Posterior cingulate gyrus (tissue), 11 donors: ENCODE measurements at regions of chr3 and their contacts with region 1.

Region 1: GRCh38 chr3:195522254-195523023 is 20.7 kb downstream of the PPP1R2 start:
- DNase-seq: no peak

Region 2: GRCh38 chr3:194671900-194672808 is 850.3 kb before region 1 on chr3 and contains the start of gene LSG1:
- intact Hi-C with region 1: loop called (anchors 5 kb)
- DNase-seq: peak; percentile 80 to 98 (median 90)

Region 3: GRCh38 chr3:195271116-195271858 is 251.2 kb before region 1 on chr3 and contains the start of gene XXYLT1:
- intact Hi-C with region 1: loop called (anchors 1 kb)
- DNase-seq: peak; percentile 79 to 98 (median 88)

Region 4: DNA sequence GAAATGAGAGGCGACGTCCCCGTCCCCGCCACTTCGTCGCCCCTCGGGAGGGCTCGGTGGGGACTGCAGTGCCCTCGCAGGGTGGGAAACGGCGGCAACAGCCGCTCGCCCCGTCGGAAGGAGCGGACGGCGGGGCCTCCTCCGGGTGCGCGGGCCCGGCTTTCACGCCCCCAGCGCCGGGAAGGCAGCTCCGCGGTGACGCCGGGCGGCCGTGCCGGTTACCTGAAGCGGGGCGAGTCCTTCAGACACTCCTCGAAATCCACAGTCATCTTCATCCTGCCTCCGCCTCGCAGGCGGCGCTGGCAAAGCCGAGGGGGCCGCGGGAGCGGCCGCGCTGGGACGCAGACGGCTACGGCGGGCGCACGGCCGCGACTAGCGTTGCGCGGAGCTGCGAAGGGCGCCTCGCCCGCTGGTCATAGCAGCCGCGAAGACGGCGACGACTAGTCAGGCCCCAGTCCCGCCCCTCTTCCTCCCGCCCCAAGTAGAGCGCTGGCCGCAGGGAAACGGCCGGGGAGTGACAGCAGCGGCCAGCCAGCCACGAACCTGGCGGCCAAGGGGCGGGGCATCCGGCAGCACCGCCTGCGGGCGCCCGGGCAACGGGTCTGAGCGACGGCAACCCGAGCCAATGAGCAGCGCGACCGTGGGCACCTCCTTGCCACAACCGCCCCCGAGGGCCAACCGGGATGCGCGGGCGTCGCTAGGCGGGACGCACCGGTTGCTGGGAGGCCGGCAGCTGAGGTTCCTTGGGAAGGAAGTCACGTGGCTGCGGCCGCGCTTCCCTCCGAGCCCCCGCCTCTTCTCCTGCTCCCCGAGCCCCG is 79.7 kb before region 1 on chr3 and contains the start of gene ACAP2:
- intact Hi-C with region 1: loop called (anchors 5 kb)
- DNase-seq: peak; percentile 100